ENCODE measurements at regions of chr1 and their contacts with region 1.

Region 1: DNA sequence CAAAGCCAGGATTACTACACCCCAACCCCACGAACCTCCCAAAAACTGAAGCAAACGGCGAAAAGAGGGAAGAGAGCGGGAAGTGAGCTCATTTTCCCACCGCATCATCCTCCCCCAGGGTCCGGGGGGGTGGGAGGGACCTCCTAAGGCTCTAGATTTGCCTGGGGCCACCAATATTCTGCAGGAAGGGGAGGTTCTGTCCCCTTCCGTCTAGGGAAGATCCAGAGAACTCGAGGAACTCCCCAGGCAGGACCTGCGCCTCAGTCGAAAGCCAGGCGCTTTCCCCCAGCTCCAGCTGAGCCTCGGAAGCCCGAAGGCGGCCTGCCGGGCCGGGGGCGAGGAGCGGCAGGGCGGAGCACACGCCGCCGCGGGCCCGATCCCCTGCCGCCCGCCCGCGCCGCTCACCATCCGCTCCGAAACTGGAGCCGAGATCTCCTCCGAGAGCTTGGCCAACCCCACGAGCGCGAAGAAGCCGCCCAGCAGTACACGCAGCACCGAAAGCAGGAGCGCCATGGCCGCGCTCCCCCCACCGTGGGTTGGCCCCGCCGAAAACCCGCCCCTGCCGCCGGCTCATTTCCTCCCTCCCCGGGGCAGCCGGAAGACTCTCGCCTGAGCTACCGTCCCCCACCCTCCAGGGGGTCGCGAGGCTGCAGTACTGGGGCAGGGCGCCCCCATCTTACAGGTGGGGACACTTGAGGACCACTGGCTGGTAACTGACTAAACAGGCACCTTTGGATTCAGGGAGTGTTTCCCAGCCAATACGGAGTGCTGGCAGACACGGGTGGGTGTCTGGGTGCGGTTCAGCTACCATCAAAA is at the start of gene TMEM35B:
- DNase-seq: peak; percentile 87
- ATAC-seq: peak; percentile 96
- total RNA-seq, gene TMEM35B: 9.0 TPM

Region 2: DNA sequence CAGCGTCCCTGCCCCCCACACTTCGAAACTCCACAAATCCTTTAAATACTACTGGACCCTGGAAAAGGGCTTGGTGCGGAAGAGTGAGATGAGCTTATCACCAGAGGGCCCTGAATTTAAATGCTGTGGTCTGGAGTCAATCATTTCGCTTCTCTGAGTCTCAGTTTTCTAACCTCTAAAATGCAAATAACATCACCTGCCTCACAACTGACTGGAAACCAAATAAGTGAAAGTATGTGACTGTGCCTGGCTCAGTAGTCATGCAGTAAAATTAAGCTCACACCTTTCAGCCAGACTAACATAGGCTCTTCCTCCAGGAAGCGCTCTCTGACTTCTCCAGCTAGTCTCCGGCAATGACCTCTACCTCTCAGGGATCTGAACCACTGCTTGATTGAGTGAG is 188.0 kb before region 1 on chr1:
- intact Hi-C with region 1: no loop called
- DNase-seq: no peak
- ATAC-seq: no peak

Region 3: GRCh38 chr1:34859446-34860200 is 125.4 kb before region 1 on chr1 and contains the start of gene SMIM12:
- intact Hi-C with region 1: loop called (anchors 10 kb)
- DNase-seq: peak; percentile 96
- ATAC-seq: peak; percentile 99
- total RNA-seq, gene SMIM12: 35.9 TPM